B cell (primary cell): ENCODE measurements at regions of chr6 and their contacts with region 1.

Region 1: DNA sequence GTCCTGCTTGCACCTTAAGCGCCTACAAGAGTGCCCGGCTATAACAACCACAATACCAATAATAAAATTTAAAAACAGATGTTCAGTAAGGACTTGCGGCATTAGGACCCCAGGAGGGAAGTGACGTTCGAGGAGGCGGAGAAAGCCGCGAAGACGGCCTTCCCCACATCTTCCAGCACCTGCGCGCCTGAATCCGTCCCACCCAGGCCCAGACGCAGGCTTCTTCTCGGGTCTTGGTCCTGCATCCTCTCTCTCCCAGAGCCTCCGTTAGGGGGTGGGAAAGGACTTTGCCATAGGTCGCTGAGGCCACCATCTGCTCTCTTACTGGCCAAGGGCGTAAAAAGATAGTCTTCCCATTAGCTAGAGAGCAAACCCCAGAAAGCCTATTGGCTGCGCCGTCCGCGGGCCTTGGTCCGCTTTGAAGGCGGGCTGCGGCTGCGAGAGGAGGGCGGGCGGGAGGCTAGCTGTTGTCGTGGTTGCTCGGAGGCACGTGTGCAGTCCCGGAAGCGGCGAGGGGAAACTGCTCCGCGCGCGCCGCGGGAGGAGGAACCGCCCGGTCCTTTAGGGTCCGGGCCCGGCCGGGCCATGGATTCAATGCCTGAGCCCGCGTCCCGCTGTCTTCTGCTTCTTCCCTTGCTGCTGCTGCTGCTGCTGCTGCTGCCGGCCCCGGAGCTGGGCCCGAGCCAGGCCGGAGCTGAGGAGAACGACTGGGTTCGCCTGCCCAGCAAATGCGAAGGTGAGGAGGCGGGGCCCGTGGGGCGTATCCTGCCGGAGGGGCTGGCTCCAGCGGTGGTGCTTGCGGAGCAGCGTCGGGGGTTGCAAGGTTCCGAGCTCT is at the start of gene CNPY3:
- DNase-seq: peak; percentile 97
- ATAC-seq: peak; percentile 75
- H3K4me3 ChIP-seq: peak within 1 kb of the TSS; percentile 86 to 89 (median 87)
- H3K4me3 Mint-ChIP-seq: peak within 1 kb of the TSS; percentile 100
- H3K27ac ChIP-seq: peak within 1 kb of the TSS; percentile 94 to 97
- H3K27ac Mint-ChIP-seq: peak within 1 kb of the TSS; percentile 100
- H3K4me1 ChIP-seq: peaks cover 44 to 49% of the 10 kb centered on the region in 2 donors
- H3K4me1 Mint-ChIP-seq: peaks cover 49% of the 10 kb centered on the region
- H3K27me3 ChIP-seq: no peaks in the 10 kb centered on the region
- H3K27me3 Mint-ChIP-seq: no peaks in the 10 kb centered on the region
- CTCF ChIP-seq: no peak
- total RNA-seq, gene CNPY3: 159 and 163 TPM in 2 replicates

Region 2: GRCh38 chr6:42661540-42662153 is 267.6 kb before region 1 on chr6:
- CTCF ChIA-PET with region 1: interaction called, 7 read pairs
- POLR2A ChIA-PET with region 1: no interaction called
- intact Hi-C with region 1: loop called (anchors 1 kb)
- DNase-seq: peak; percentile 84
- ATAC-seq: peak; percentile 93
- H3K4me3 ChIP-seq: no peak overlapping the region
- H3K4me3 Mint-ChIP-seq: no peak overlapping the region
- H3K27ac ChIP-seq: peak overlapping the region in 1 of 2 donors; percentile 5
- H3K27ac Mint-ChIP-seq: no peak overlapping the region
- H3K4me1 ChIP-seq: no peaks in the 10 kb centered on the region
- H3K4me1 Mint-ChIP-seq: no peaks in the 10 kb centered on the region
- H3K27me3 ChIP-seq: no peaks in the 10 kb centered on the region
- H3K27me3 Mint-ChIP-seq: no peaks in the 10 kb centered on the region
- CTCF ChIP-seq: peak; percentile 91

Region 3: GRCh38 chr6:42879372-42880239 is 49.6 kb before region 1 on chr6 and contains the start of gene RPL7L1:
- CTCF ChIA-PET with region 1: no interaction called
- POLR2A ChIA-PET with region 1: interaction called, 19 read pairs
- intact Hi-C with region 1: loop called (anchors 1 kb)
- DNase-seq: peak; percentile 93
- ATAC-seq: peak; percentile 95
- H3K4me3 ChIP-seq: peak within 1 kb of the TSS; percentile 76 to 99 (median 90)
- H3K4me3 Mint-ChIP-seq: peak within 1 kb of the TSS; percentile 96
- H3K27ac ChIP-seq: peak within 1 kb of the TSS; percentile 85 to 87
- H3K27ac Mint-ChIP-seq: peak within 1 kb of the TSS; percentile 97
- H3K4me1 ChIP-seq: peaks cover 8 to 18% of the 10 kb centered on the region in 2 donors
- H3K4me1 Mint-ChIP-seq: peaks cover 21% of the 10 kb centered on the region
- H3K27me3 ChIP-seq: no peaks in the 10 kb centered on the region
- H3K27me3 Mint-ChIP-seq: no peaks in the 10 kb centered on the region
- CTCF ChIP-seq: no peak
- total RNA-seq, gene RPL7L1: 95.9 and 100 TPM in 2 replicates

Region 4: DNA sequence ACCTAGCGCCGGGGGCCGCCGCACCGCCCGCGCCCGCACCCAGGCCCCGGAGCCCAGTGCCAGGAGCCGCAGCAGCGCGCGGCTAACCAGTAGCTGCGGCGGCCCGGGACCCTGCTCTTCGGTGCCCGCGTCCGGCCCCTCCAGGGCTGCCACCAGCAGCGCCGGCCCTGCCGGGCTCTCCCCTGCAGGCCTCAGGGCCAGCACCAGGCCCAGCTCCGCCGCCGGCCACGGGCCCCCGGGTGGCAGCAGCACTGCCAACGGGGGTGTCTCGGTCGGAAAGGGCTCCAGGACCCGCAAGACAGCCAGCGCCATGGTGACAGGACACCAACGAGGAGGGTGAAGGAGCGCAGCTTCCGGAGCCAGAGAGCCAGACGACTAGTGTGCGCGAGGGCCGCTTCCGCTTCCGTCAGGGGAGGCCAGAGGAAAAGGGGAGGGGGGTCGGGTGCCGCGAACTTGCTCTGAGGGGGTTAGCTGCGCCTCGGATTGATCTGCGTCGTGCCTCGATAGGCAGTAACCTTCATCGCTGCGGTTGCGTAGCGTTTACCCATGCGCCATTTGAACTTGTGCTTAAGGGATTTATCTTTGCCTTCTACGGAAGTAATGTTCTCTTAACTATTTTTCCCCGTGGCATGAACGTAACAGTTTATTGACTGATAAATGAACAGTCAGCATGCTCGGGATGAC is 49.8 kb after region 1 on chr6 and contains the start of gene PEX6:
- CTCF ChIA-PET with region 1: interaction called, 8 read pairs
- POLR2A ChIA-PET with region 1: interaction called, 53 read pairs
- intact Hi-C with region 1: loop called (anchors 1 kb)
- DNase-seq: peak; percentile 95
- ATAC-seq: peak; percentile 94
- H3K4me3 ChIP-seq: peak within 1 kb of the TSS; percentile 71 to 88 (median 80)
- H3K4me3 Mint-ChIP-seq: peak within 1 kb of the TSS; percentile 98
- H3K27ac ChIP-seq: peak within 1 kb of the TSS; percentile 73 to 85
- H3K27ac Mint-ChIP-seq: peak within 1 kb of the TSS; percentile 98
- H3K4me1 ChIP-seq: peaks cover 19 to 30% of the 10 kb centered on the region in 2 donors
- H3K4me1 Mint-ChIP-seq: peaks cover 38% of the 10 kb centered on the region
- H3K27me3 ChIP-seq: no peaks in the 10 kb centered on the region
- H3K27me3 Mint-ChIP-seq: no peaks in the 10 kb centered on the region
- CTCF ChIP-seq: no peak
- total RNA-seq, gene PEX6: 16.6 and 17.1 TPM in 2 replicates

Region 5: DNA sequence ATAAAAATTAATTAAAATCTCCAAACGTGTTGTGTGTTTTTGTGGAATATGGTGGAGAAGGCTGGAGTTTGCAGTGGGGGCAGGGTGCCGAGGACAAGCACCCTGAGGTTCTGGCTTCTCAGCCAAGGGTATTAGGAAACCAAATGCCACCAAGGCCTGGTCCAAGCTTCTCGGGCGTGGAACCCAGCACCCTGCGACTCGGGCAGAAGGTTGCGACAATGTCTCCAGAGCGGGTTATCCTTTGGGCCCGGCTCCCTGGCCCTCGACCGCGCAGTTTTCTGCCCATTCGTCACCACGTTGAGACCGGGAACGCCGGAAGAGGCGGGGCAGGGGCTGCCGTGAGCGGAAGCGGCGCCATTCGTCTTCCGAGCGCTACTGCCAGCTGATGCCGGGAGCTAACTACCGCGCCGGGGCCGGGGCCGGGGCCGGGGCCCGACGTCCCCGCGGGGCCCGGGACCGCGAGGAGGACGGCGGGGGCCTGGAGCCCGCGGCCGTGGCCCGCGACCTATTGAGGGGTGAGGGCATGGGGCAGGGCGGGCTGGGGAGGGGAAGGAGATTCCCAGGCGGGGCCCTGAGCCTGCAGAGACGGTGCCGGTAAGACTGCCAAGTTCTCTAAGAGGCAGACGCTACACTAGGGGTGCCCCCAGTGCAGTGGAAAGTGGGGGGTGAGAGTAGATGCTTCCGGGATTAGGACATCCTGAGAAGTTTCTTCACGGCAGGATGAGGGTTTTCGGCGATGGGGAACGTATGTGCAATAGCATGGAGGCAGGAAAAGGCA is 92.3 kb after region 1 on chr6 and contains the start of gene RRP36:
- CTCF ChIA-PET with region 1: no interaction called
- POLR2A ChIA-PET with region 1: interaction called, 10 read pairs
- intact Hi-C with region 1: no loop called
- DNase-seq: peak; percentile 73
- ATAC-seq: peak; percentile 92
- H3K4me3 ChIP-seq: peak within 1 kb of the TSS; percentile 77 to 99 (median 87)
- H3K4me3 Mint-ChIP-seq: peak within 1 kb of the TSS; percentile 98
- H3K27ac ChIP-seq: peak within 1 kb of the TSS; percentile 25 to 72
- H3K27ac Mint-ChIP-seq: peak within 1 kb of the TSS; percentile 82
- H3K4me1 ChIP-seq: peaks cover 3 to 25% of the 10 kb centered on the region in 2 donors
- H3K4me1 Mint-ChIP-seq: peaks cover 27% of the 10 kb centered on the region
- H3K27me3 ChIP-seq: no peaks in the 10 kb centered on the region
- H3K27me3 Mint-ChIP-seq: no peaks in the 10 kb centered on the region
- CTCF ChIP-seq: no peak
- total RNA-seq, gene RRP36: 43.5 and 46.2 TPM in 2 replicates

Region 6: GRCh38 chr6:43181942-43182860 is 253.0 kb after region 1 on chr6 and contains the start of gene CUL9:
- CTCF ChIA-PET with region 1: interaction called, 3 read pairs
- POLR2A ChIA-PET with region 1: no interaction called
- intact Hi-C with region 1: loop called (anchors 1 kb)
- DNase-seq: peak; percentile 90
- ATAC-seq: peak; percentile 99
- H3K4me3 ChIP-seq: peak within 1 kb of the TSS; percentile 60 to 90 (median 74)
- H3K4me3 Mint-ChIP-seq: peak within 1 kb of the TSS; percentile 92
- H3K27ac ChIP-seq: peak within 1 kb of the TSS; percentile 64 to 87
- H3K27ac Mint-ChIP-seq: peak within 1 kb of the TSS; percentile 91
- H3K4me1 ChIP-seq: peaks cover 20% of the 10 kb centered on the region in 2 donors
- H3K4me1 Mint-ChIP-seq: peaks cover 38% of the 10 kb centered on the region
- H3K27me3 ChIP-seq: no peaks in the 10 kb centered on the region
- H3K27me3 Mint-ChIP-seq: no peaks in the 10 kb centered on the region
- CTCF ChIP-seq: no peak
- total RNA-seq, gene CUL9: 110 and 115 TPM in 2 replicates

Region 7: GRCh38 chr6:43516697-43517504 is 587.7 kb after region 1 on chr6 and contains the starts of genes POLR1C and YIPF3:
- CTCF ChIA-PET with region 1: no interaction called
- POLR2A ChIA-PET with region 1: no interaction called
- intact Hi-C with region 1: loop called (anchors 10 kb)
- DNase-seq: peak; percentile 97
- ATAC-seq: peak; percentile 96
- H3K4me3 ChIP-seq: peak within 1 kb of the TSS; percentile 78 to 98 (median 91)
- H3K4me3 Mint-ChIP-seq: no peak within 1 kb of the TSS
- H3K27ac ChIP-seq: peak within 1 kb of the TSS; percentile 65 to 91
- H3K27ac Mint-ChIP-seq: no peak within 1 kb of the TSS
- H3K4me1 ChIP-seq: peaks cover 28 to 36% of the 10 kb centered on the region in 2 donors
- H3K4me1 Mint-ChIP-seq: peaks cover 27% of the 10 kb centered on the region
- H3K27me3 ChIP-seq: no peaks in the 10 kb centered on the region
- H3K27me3 Mint-ChIP-seq: no peaks in the 10 kb centered on the region
- CTCF ChIP-seq: no peak
- total RNA-seq, gene POLR1C: 42.0 and 43.3 TPM in 2 replicates
- total RNA-seq, gene YIPF3: 82.1 and 92.6 TPM in 2 replicates